Breast epithelium (tissue), 4 donors: ENCODE measurements at regions of chr1 and their contacts with region 1.

Region 1: GRCh38 chr1:166910396-166910994 is 34.4 kb upstream of the TADA1 start:
- DNase-seq: peak in 1 of 2 donors; percentile 70
- H3K4me3 ChIP-seq: no peak overlapping the region
- H3K27ac ChIP-seq: no peak overlapping the region
- H3K4me1 ChIP-seq: no peaks in the 10 kb centered on the region
- H3K27me3 ChIP-seq: no peaks in the 10 kb centered on the region
- CTCF ChIP-seq: peak; percentile 17 to 70 (median 48)
- POLR2A ChIP-seq: no peak

Region 2: GRCh38 chr1:167517535-167518330 is 607.2 kb after region 1 on chr1:
- intact Hi-C with region 1: no loop called
- DNase-seq: no peak
- H3K4me3 ChIP-seq: peak overlapping the region in 2 of 3 donors; percentile 11 to 22
- H3K27ac ChIP-seq: no peak overlapping the region
- H3K4me1 ChIP-seq: no peaks in the 10 kb centered on the region
- H3K27me3 ChIP-seq: no peaks in the 10 kb centered on the region
- CTCF ChIP-seq: no peak
- POLR2A ChIP-seq: no peak

Region 3: DNA sequence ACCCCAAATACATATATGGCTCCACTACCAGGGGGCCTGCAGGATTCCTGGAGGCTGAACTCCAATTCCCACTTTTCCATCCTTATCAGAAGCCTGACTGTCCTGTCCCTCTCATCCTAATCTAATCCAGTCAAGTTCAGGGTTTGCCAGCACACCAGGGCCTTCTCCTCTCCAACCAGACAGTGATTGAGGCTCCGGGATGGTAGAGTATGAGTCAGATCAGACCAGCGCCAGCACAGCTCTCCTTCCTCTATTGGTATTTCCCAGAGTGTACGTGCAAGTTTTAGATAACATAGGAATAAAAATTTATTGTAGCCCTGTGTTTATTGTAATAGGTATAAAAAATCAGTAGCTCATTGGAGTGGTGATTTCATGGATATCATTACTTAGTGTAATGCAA is 695.1 kb after region 1 on chr1:
- intact Hi-C with region 1: loop called (anchors 5 kb)
- DNase-seq: no peak
- H3K4me3 ChIP-seq: no peak overlapping the region
- H3K27ac ChIP-seq: peak overlapping the region; percentile 69 to 80
- H3K4me1 ChIP-seq: peaks cover 2 to 9% of the 10 kb centered on the region in 2 donors
- H3K27me3 ChIP-seq: no peaks in the 10 kb centered on the region
- CTCF ChIP-seq: no peak
- POLR2A ChIP-seq: no peak